ENCODE measurements at regions of chr14 and their contacts with region 1.

Region 1: DNA sequence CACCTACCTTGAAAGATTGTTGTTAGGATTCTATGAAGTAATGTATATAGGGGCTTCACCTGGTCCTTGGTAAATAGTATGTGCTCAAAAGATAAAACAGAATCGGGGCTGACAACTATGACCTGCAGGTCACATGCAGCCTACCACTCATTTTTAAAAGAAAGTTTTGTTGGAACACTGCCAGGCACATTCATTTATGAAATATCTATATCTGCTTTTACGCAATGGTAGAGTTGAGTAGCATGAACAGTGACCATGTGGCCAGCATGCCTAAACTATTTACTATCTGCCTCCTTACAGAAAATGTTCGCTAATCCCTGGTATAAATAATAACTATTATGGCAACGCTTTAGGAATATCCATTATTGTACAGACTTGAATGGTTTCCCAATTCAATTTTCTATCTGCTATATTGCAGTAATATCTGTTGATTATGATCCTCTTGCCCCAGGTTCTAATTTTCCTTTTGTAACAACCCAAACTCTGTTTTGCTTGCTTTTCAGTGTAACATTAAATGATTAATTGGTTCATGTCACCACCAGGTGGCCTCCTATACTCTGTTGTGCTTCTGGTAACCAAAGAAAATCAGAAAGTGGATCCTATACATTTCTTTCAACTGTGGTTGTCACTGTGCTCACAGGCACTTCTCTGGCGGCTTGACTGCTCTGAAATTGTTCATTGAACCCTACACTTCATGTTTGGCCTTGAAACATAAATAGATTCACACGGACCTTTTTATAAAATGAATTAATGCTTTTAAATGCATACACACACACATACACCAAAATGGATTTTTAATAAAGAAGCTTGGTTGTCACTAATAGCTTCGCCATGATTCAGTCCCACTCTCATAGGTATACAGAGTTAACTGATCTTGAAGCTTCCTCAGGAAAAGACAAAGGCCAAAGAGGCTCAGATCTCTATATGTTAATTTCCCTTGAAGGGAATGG is 227.7 kb upstream of the NPAS3 start:
- DNase-seq: peak; percentile 29
- H3K4me3 ChIP-seq: no peak overlapping the region
- H3K27ac ChIP-seq: no peak overlapping the region; a peak in 1 of 4 replicates
- H3K4me1 ChIP-seq: peaks cover 2 to 29% of the 10 kb centered on the region in 2 experiments; a peak in 3 of 4 replicates
- H3K27me3 ChIP-seq: no peaks in the 10 kb centered on the region
- CTCF ChIP-seq: peak; percentile 74
- EP300 ChIP-seq: no peak
- RAD21 ChIP-seq: peak; percentile 84

Region 2: GRCh38 chr14:32669391-32669790 is 41.6 kb before region 1 on chr14:
- CTCF ChIA-PET with region 1: no interaction called
- POLR2A ChIA-PET with region 1: no interaction called
- DNase-seq: no peak
- H3K4me3 ChIP-seq: no peak overlapping the region
- H3K27ac ChIP-seq: no peak overlapping the region
- H3K4me1 ChIP-seq: peaks cover 16 to 22% of the 10 kb centered on the region in 2 experiments; a peak in 3 of 4 replicates
- H3K27me3 ChIP-seq: no peaks in the 10 kb centered on the region
- CTCF ChIP-seq: no peak
- EP300 ChIP-seq: no peak
- RAD21 ChIP-seq: no peak

Region 3: DNA sequence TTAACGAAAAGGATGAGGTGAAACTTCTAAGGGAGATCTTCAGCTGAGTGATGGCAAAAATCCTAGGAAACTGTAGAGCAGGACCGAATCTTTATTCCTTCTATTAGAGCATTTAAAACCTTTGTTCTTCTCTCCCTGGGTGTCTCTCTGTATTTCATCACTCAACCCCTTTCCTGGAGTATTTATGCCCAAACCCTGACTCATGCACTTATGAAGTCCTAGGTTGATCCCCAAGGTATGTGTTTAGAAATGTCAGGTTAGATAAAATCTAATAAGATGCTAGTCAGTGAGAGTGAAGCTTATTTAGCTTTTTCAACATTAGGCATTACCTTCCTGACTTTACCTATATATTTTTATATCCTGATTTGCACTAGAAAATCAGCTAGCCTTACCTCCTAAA is 12.2 kb before region 1 on chr14:
- CTCF ChIA-PET with region 1: interaction called, 12 read pairs
- POLR2A ChIA-PET with region 1: no interaction called
- DNase-seq: no peak
- H3K4me3 ChIP-seq: no peak overlapping the region
- H3K27ac ChIP-seq: peak overlapping the region in 1 of 2 experiments; percentile 70; a peak in 3 of 4 replicates
- H3K4me1 ChIP-seq: peaks cover 14 to 42% of the 10 kb centered on the region in 2 experiments
- H3K27me3 ChIP-seq: no peaks in the 10 kb centered on the region
- CTCF ChIP-seq: no peak
- EP300 ChIP-seq: peak in 1 of 2 experiments; percentile 54; a peak in 1 of 4 replicates
- RAD21 ChIP-seq: no peak